Right cardiac atrium (tissue), 5 donors: ENCODE measurements at regions of chr3 and their contacts with region 1.

Region 1: DNA sequence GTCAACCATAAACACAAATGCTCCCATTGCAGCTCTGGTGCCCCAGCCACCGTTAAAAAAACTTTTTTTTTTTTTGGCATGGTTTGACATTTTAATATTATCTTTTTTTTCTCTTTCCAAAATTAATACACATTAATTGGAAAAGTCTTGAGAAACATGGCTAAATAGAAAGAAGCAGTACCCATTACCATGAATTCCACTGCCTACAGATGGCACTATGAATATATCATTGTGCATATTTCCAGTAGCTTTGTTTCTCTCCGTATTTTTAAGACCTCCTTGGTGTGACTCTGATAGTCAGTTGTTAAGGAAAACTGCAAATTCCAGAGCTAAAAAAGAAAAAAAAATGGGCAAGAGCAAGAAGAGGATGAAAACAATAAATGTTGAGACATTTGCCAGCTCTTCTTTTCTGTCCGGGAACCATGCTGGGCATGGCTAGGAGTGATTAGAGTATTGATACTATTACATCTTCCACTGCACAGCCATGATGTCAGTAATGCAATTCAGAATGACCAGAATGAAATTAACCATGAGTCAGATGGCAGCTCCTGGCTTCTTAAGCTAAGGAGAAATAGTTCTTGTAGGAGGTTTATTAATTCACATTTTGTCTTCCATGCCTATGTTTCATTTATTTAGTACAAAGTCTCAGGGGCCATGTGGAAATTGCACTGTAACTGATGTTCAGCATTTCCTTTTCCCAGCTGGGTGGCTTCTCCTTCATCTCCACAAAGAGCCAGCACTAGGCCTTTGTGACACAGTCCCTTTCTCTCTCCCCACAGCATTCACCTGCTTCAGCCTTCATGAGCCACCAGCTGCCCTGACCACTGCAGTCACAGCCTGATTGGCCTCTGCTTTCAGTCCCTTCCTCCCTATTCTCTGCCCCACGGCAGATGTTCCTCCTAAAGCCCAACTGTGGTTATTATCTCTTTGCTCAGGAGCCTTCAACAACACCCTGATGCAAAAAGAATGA is 31.8 kb downstream of the SLC7A14 start:
- DNase-seq: no peak
- ATAC-seq: no peak
- H3K4me3 ChIP-seq: no peak overlapping the region
- H3K27ac ChIP-seq: no peak overlapping the region
- H3K4me1 ChIP-seq: no peaks in the 10 kb centered on the region
- H3K27me3 ChIP-seq: no peaks in the 10 kb centered on the region

Region 2: DNA sequence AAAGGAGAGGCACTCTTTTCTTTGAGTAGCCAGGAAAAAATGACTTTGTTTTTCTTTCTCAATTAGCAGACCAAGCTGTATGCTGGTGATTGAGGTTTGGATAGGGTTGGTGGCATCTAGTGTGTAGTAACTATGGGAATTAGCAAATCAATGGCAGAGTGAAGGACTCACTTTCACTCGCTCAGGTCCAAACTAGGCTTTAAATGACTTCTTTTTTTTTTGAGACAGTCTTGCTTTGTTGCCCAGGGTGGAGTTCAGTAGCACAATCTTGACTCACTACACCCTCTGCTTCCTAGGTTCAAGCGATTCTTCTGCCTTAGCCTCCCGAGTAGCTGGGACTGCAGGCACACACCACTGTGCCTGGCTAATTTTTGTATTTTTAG is 296.0 kb before region 1 on chr3:
- intact Hi-C with region 1: no loop called
- DNase-seq: no peak
- ATAC-seq: no peak
- H3K4me3 ChIP-seq: no peak overlapping the region
- H3K27ac ChIP-seq: no peak overlapping the region
- H3K4me1 ChIP-seq: no peaks in the 10 kb centered on the region
- H3K27me3 ChIP-seq: no peaks in the 10 kb centered on the region

Region 3: DNA sequence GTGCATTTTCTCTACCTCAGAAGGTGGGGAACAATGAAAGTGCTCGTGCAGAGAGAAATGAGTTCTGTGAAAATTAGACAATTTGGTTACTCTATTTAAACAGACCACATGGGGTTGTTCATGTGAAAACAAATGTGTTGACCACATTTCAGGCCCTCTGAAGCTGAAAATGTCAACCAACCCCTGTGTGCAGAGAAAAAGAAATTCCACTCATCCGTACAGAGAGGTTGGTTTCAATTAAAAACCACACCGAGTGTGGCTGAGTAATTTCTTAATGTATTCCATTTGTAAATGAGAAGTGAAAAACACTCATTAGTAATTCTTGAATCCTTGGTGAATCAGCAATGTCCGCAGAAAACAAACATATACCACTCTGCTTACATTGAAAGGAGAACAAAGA is 78.7 kb after region 1 on chr3:
- intact Hi-C with region 1: no loop called
- DNase-seq: no peak
- ATAC-seq: no peak
- H3K4me3 ChIP-seq: no peak overlapping the region
- H3K27ac ChIP-seq: no peak overlapping the region
- H3K4me1 ChIP-seq: peaks cover 2% of the 10 kb centered on the region
- H3K27me3 ChIP-seq: no peaks in the 10 kb centered on the region

Region 4: DNA sequence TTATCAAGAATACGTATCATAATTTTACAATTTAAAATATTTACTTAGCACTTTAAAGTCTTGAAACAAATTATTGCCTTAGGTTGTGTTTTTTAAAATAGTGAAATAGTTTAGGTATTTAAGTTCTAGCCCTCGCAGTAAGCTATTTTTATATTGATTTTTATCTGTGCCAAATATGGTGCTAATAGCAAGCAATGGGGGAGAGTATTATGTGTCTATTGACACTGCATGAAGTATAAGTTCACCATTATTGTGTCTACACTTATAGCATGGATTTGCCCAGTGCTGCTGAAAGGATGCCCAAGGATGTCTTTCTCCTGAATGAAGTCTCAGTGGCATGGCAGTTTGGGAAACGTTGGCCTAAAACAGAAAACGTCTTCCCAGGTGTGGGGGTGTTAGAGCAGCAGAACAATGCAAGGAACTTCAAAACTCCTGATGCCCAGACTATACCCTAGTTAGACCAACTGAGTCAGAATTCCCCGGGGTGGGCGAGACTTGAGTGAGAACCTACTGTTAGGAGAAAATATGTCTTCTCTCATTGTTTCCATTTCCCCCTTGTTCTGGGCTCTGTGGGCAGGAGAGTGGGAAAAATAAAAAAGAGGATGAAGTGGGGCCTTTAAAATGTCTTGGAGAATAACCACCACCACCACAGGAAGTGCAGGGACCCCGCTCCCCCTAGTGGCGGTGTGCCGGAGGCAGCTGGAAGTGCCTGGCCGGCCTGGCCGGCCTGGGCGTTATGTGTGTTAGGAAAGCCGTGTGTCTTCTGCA is 136.0 kb after region 1 on chr3:
- intact Hi-C with region 1: loop called in 2 of 4 experiments (anchors 2 to 5 kb)
- DNase-seq: peak; percentile 72 to 86 (median 84)
- ATAC-seq: peak; percentile 76 to 78
- H3K4me3 ChIP-seq: no peak overlapping the region
- H3K27ac ChIP-seq: no peak overlapping the region
- H3K4me1 ChIP-seq: peaks cover 1% of the 10 kb centered on the region
- H3K27me3 ChIP-seq: no peaks in the 10 kb centered on the region

Region 5: DNA sequence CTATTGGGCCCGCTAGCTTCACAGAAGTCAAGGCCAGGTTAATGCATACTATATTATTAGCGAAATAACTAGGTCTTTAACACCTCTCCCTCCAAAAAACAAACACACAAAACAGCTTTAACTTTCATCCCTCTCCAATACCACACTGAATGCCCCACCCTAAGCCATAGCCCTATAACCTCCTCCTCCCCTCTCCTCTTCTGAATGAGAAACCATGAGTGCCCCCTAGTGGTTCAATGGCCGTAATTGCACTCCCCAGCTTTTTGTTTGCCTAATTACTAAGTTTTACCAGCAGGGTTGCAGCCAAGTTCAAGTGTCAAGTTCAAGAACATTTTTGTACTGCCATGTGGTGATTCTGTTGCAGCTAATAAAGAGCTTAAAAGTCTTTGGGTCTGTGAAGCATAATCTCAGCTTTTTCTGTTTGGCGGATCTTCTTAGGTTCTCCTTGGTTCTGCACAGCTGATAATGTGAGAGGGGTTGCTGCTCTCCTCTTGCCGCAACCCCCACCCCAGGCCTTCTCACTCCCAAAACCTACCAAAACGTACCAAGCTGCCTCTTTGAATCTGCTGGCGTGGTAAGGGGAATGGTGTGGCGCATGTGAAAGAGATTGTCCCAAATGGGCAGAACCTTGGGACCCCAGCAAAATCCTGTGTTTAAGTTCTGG is 258.0 kb after region 1 on chr3:
- intact Hi-C with region 1: loop called in 2 of 4 experiments (anchors 10 kb)
- DNase-seq: peak; percentile 40 to 77 (median 63)
- ATAC-seq: peak; percentile 74 to 86
- H3K4me3 ChIP-seq: no peak overlapping the region
- H3K27ac ChIP-seq: no peak overlapping the region
- H3K4me1 ChIP-seq: no peaks in the 10 kb centered on the region
- H3K27me3 ChIP-seq: no peaks in the 10 kb centered on the region